ENCODE measurements at regions of chr5 and their contacts with region 1.

Region 1: GRCh38 chr5:140346348-140347101 is at the start of gene HBEGF:
- DNase-seq: peak; percentile 82 to 89
- ATAC-seq: peak; percentile 69 to 78 (median 72)
- H3K4me3 ChIP-seq: peak within 1 kb of the TSS; percentile 73
- H3K27ac ChIP-seq: peak within 1 kb of the TSS; percentile 94
- H3K4me1 ChIP-seq: peaks cover 67% of the 10 kb centered on the region
- H3K27me3 ChIP-seq: no peaks in the 10 kb centered on the region
- CTCF ChIP-seq: peak; percentile 57
- total RNA-seq, gene HBEGF: 28.9 to 36.7 (median 34.2) TPM

Region 2: DNA sequence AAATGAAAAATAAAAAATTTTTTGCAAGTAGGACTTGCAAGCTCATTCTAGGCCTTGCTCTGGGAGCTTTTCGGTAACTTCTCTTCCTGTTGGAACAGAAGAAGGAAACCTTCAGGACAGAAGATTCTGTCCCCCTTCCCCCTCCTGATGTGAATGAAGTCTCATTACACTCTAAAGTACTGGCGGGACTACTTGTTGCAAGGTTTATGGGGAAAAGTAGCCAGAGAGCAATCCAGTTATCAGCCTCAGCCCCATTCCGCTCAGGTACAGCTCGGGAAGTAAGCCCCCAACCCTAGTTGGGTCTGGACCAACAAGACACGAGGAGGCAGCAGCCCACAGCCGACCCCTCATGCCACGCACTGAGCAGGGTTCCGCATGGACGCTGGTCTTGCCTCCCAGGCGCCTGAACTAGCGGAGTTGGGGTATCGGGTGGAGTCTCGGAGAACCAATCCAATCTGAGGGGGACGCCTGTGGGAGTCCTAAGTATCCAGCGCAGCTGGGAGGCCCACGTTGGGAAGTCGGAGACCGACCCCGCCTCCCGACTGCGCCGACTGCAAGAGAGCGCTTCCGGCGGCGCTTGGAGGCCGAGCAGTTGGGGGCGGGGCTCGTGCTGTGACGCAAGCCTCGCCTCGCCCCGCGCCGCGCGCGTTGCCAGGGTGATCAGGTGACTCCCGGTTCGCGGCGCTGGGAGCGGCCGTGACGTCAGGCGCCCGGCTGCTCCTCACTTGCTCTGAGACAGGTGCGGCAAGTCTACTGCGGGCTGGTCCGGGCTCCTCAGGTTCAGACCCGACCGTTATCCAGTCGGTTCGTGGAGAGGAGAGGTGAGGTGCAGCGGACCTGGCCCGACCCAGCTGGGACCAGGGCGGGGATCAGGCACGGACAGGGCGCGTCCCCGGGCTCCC is 171.8 kb before region 1 on chr5 and contains the start of gene CYSTM1:
- intact Hi-C with region 1: loop called (anchors 5 kb)
- DNase-seq: peak; percentile 97 to 98
- ATAC-seq: peak; percentile 86 to 90 (median 88)
- H3K4me3 ChIP-seq: peak within 1 kb of the TSS; percentile 95
- H3K27ac ChIP-seq: peak within 1 kb of the TSS; percentile 100
- H3K4me1 ChIP-seq: peaks cover 36% of the 10 kb centered on the region
- H3K27me3 ChIP-seq: no peaks in the 10 kb centered on the region
- CTCF ChIP-seq: no peak
- total RNA-seq, gene CYSTM1: 193 to 408 (median 285) TPM

Measured in psoas muscle (tissue), 8 donors.